ENCODE measurements at regions of chr14 and their contacts with region 1.

Region 1: DNA sequence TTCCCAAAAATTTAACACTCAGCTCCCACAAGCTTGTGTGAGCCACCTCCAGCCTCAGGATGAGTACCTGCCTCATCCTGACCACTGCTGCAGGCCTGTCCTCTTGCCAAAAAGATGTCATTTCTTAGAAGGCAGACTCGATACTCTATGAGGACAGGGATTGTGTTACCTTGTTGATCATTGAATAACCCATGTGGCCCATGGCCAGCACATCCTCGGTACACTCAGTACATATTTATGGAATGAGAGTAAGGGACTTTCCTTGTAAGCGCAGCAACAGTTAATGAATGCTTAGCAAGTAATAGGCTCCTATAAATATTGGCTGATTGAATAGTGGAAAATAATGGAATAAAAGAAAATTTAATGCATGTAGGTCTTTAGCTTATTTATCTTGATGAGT is 15.3 kb upstream of the DGLUCY start:
- DNase-seq: no peak
- H3K4me3 Mint-ChIP-seq: no peak overlapping the region
- H3K27ac Mint-ChIP-seq: no peak overlapping the region
- H3K4me1 Mint-ChIP-seq: peaks cover 30% of the 10 kb centered on the region
- H3K27me3 Mint-ChIP-seq: no peaks in the 10 kb centered on the region

Region 2: GRCh38 chr14:91108941-91109611 is 10.5 kb after region 1 on chr14:
- CTCF ChIA-PET with region 1: interaction called, 6 read pairs
- POLR2A ChIA-PET with region 1: interaction called, 46 read pairs
- DNase-seq: peak; percentile 51
- H3K4me3 Mint-ChIP-seq: peak overlapping the region; percentile 36
- H3K27ac Mint-ChIP-seq: peak overlapping the region; percentile 93
- H3K4me1 Mint-ChIP-seq: peaks cover 57% of the 10 kb centered on the region
- H3K27me3 Mint-ChIP-seq: no peaks in the 10 kb centered on the region

Region 3: GRCh38 chr14:91202234-91202974 is 103.8 kb after region 1 on chr14:
- CTCF ChIA-PET with region 1: no interaction called
- POLR2A ChIA-PET with region 1: no interaction called
- DNase-seq: peak; percentile 63
- H3K4me3 Mint-ChIP-seq: peak overlapping the region; percentile 37
- H3K27ac Mint-ChIP-seq: peak overlapping the region; percentile 81
- H3K4me1 Mint-ChIP-seq: peaks cover 68% of the 10 kb centered on the region
- H3K27me3 Mint-ChIP-seq: no peaks in the 10 kb centered on the region